ENCODE measurements at regions of chr1 and their contacts with region 1.

Region 1: GRCh38 chr1:27979151-27979858 is 19.5 kb downstream of the XKR8 start:
- DNase-seq: no peak
- H3K4me3 ChIP-seq: no peak overlapping the region
- H3K27ac ChIP-seq: peak overlapping the region in 5 of 8 donors; percentile 12 to 65 (median 58)
- H3K4me1 ChIP-seq: peaks cover 0 to 16% (median 8%) of the 10 kb centered on the region in 6 donors
- H3K27me3 ChIP-seq: no peaks in the 10 kb centered on the region
- CTCF ChIP-seq: peak in 9 of 11 experiments; percentile 23 to 67 (median 54)
- POLR2A ChIP-seq: no peak

Region 2: DNA sequence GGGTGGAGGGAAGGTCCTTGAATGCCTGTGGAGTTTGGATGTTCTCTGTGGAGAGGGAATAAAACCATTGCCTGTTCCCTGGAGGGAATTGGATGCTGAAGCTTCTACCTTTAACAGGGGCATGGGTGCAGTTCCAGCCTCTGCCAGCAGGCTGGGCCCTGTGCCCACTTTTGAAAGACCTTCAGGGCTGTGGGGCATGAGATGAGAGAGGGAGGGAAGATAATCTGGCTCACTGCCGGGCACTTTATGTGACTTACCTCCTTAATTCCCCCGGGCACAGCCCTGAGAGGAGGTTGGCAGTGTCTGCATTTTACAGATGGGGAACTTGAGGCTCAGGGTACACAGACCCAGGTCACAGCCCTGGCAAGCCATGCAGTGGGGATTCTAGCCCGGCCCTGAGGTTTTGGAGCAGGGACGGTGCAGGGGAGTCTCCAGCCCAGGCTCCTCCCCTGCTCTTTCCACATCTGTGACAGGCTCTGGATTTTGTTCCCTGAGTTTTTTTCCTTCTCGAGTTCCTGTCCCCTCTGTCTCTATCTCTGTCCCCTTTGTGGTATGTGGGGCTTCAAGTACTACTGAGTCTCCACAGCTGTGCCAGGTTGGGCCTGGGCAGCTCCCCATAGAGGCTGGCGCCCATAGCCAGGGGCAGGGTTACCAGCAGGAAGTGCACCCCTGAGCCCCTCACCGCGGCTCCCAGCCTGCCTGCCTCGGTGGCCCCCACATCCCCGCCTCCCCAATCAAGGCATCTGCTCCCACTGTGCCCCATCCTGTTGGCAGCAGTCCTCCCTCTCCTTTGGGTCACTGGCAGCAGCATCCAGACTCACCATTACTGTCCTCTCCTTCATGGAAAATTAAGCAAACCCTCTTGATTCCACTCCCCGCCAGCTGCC is 121.0 kb before region 1 on chr1:
- intact Hi-C with region 1: loop called (anchors 2 kb)
- DNase-seq: peak; percentile 95
- H3K4me3 ChIP-seq: peak overlapping the region in 2 of 8 donors; percentile 5 to 46
- H3K27ac ChIP-seq: peak overlapping the region in 7 of 8 donors; percentile 9 to 85 (median 75)
- H3K4me1 ChIP-seq: peaks cover 4 to 34% (median 24%) of the 10 kb centered on the region in 6 donors
- H3K27me3 ChIP-seq: no peaks in the 10 kb centered on the region
- CTCF ChIP-seq: peak; percentile 91 to 99 (median 98)
- POLR2A ChIP-seq: no peak

Region 3: DNA sequence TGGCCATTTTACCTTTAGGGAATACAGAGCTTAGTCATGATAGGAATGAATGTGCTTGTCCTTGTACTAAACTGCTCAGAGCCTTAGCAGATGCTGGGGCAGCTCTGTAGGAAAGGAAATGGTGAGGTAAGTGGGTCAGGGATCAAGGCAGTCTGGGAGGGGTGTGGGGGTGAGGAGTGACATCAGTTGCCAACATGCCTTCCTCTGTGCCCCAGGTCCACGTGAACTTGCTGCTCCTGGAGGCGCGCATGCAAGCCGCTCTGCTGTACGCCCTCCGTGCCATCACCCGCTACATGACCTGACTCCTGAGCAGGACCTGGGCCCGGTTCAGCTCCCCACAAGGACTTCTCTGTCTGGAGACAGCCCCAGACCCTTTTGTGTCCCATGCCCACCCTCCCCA is 301.2 kb after region 1 on chr1:
- intact Hi-C with region 1: no loop called
- DNase-seq: no peak
- H3K4me3 ChIP-seq: no peak overlapping the region
- H3K27ac ChIP-seq: peak overlapping the region in 5 of 8 donors; percentile 1 to 71 (median 63)
- H3K4me1 ChIP-seq: peaks cover 0 to 48% (median 27%) of the 10 kb centered on the region in 6 donors
- H3K27me3 ChIP-seq: no peaks in the 10 kb centered on the region
- CTCF ChIP-seq: no peak
- POLR2A ChIP-seq: no peak

Measured in spleen (tissue), 13 donors.